T-cell (primary cell): ENCODE measurements at regions of chr20 and their contacts with region 1.

Region 1: DNA sequence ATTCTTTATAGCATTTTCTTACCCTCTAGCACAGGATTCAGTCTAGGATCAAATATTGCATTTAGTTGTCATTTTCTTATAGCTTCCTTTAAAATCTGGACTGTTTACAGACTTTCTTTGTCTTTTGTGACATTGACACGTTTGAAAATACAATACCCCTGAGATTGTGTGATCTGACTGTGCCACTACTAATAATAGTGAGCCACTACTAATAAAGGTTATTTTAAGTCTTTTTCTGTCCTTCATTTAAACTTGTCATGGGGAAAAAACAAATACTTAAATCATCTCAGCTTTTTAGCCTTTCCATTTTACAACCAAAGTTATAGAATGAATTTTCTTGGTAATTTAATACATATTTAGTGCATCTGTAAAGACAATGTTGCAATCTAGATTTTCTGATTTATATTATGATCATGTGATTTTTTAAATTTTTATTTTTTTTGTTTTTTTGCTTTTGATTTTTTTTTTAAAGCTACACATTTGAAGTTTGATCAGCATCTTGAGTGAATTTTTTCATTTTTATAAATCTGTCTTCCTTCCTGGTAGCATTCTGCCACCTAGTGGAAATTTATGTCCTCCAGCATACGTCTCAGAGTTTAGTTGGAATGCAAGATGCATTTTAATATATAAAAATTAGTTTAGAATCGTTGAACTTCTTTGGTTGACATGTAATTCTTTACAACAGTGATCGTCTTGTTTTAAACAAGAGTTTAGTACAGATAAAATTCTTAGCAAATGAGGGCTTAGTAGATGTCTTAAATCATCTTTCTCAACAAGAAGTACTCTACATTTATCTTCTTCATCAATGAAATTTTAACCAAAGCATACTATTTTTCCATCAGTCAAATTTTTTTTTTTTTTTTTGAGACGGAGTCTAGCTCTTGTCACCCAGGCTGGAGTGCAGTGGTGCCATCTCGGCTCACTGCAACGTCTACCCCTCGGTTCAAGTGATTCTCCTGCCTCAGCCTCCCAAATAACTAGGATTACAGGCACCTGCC is 119.4 kb downstream of the NCOA3 start:
- DNase-seq: peak in 6 of 35 experiments; percentile 5 to 70 (median 12)
- ATAC-seq: peak in 1 of 4 experiments; percentile 51
- H3K4me3 ChIP-seq: no peak overlapping the region
- H3K4me3 Mint-ChIP-seq: no peak overlapping the region
- H3K27ac ChIP-seq: no peak overlapping the region
- H3K27ac Mint-ChIP-seq: no peak overlapping the region
- H3K4me1 ChIP-seq: no peaks in the 10 kb centered on the region
- H3K4me1 Mint-ChIP-seq: peaks cover 19 to 26% (median 22%) of the 10 kb centered on the region in 3 donors
- H3K27me3 ChIP-seq: no peaks in the 10 kb centered on the region
- H3K27me3 Mint-ChIP-seq: no peaks in the 10 kb centered on the region

Region 2: DNA sequence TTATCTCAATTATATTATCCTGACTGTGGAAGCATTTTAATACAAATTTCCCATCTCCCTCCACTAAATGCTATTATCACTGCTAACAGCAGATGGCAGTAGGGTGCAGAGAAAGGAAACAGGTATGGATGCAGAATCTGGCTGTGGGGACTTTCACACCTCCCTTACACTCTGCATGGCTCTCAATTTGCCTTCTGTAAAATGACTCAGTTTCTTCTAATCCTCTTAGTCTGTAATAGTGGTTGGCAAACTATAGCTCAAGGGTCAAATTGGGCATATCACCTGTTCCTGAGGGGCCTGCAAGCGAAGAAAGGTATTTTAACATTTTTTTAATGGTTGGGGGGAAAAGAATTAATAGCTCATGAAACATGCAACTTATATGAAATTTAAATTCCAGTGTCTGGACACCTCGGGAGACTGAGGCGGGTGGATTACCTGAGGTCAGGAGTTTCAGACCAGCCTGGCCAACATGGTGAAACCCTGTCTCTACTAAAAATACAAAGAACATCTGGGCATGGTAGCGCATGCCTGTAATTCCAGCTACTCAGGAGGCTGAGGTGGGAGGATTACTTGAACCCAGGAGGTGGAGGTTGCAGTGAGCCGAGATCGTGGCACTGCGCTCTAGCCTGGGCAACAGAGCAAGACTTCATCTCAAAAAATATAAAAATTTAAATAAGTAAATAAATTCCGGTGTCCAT is 348.1 kb before region 1 on chr20:
- CTCF ChIA-PET with region 1: interaction called, 14 to 16 read pairs
- POLR2A ChIA-PET with region 1: no interaction called
- DNase-seq: peak in 28 of 35 experiments; percentile 2 to 81 (median 24)
- ATAC-seq: peak; percentile 62 to 75 (median 70)
- H3K4me3 ChIP-seq: no peak overlapping the region
- H3K4me3 Mint-ChIP-seq: no peak overlapping the region
- H3K27ac ChIP-seq: no peak overlapping the region
- H3K27ac Mint-ChIP-seq: peak overlapping the region; percentile 76 to 84
- H3K4me1 ChIP-seq: no peaks in the 10 kb centered on the region
- H3K4me1 Mint-ChIP-seq: peaks cover 0 to 42% (median 26%) of the 10 kb centered on the region in 3 donors
- H3K27me3 ChIP-seq: no peaks in the 10 kb centered on the region
- H3K27me3 Mint-ChIP-seq: no peaks in the 10 kb centered on the region

Region 3: DNA sequence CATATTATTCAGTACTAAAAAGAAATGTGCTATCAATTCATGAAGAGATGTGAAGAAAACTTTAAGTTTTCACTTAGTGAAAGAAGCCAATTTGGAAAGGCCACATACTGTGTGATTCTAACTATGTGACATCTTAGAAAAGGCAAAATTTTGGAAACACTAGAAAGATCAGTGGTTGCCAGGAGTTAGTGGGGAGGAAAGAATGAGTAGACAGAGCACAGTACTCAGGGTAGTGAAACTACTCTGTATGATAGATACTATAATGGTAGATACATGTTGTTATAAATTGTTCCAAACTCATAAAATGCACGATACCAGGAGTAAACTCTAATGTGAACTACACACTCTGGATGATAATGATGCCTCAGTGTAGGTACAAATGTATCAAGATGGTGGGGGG is 105.3 kb before region 1 on chr20:
- CTCF ChIA-PET with region 1: no interaction called
- POLR2A ChIA-PET with region 1: interaction called in 1 of 2 experiments, 16 read pairs
- DNase-seq: no peak
- ATAC-seq: no peak
- H3K4me3 ChIP-seq: no peak overlapping the region
- H3K4me3 Mint-ChIP-seq: no peak overlapping the region
- H3K27ac ChIP-seq: no peak overlapping the region
- H3K27ac Mint-ChIP-seq: peak overlapping the region in 1 of 2 donors; percentile 68
- H3K4me1 ChIP-seq: peaks cover 0 to 18% of the 10 kb centered on the region in 2 experiments
- H3K4me1 Mint-ChIP-seq: peaks cover 46 to 54% (median 51%) of the 10 kb centered on the region in 3 donors
- H3K27me3 ChIP-seq: peaks cover 0 to 3% of the 10 kb centered on the region in 2 experiments
- H3K27me3 Mint-ChIP-seq: no peaks in the 10 kb centered on the region